Calu3 (cell line): ENCODE measurements at regions of chr22 and their contacts with region 1.

Region 1: GRCh38 chr22:28951969-28952521 is 68.7 kb downstream of the ZNRF3 start:
- DNase-seq: peak; percentile 25
- H3K4me3 Mint-ChIP-seq: no peak overlapping the region
- H3K27ac Mint-ChIP-seq: no peak overlapping the region
- H3K4me1 Mint-ChIP-seq: peaks cover 46% of the 10 kb centered on the region
- H3K27me3 Mint-ChIP-seq: no peaks in the 10 kb centered on the region
- CTCF ChIP-seq: no peak

Region 2: DNA sequence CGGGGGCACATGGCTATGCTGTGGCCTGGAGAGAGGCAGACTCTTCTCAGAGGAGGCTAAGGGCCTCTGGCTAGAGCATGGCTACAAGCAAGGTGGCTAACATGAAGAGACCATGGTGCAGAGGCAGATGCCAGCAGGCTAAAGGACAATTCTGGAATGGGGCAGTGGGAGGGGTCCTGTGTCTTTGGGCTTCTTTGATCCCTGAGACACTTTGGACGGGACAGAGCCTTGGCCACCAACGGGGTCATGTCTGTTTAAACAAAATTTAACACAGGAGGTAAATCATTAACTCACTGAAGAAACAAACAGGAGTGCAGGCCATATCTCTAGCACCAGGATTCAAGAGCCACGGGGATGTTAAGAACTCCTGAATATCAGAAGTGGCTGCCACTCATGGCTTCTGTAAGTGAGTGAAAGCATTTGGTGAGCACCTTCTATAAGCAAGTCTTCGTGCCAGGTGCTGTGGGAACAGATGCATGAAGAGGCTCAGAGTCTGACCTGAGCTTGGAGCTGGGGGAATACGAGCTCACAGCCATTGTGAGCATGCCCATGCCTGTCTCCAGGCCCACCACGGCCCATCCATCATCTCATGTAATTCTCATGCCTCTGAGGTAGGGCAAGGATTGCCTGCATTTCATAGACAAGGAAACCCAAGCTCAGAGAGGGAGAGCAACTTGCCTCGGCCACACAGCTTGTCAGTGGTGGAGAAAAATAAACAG is 87.0 kb before region 1 on chr22:
- CTCF ChIA-PET with region 1: no interaction called
- intact Hi-C with region 1: no loop called
- DNase-seq: no peak
- H3K4me3 Mint-ChIP-seq: no peak overlapping the region
- H3K27ac Mint-ChIP-seq: no peak overlapping the region
- H3K4me1 Mint-ChIP-seq: peaks cover 15% of the 10 kb centered on the region
- H3K27me3 Mint-ChIP-seq: no peaks in the 10 kb centered on the region
- CTCF ChIP-seq: no peak

Region 3: GRCh38 chr22:28967163-28967665 is 15.2 kb after region 1 on chr22:
- CTCF ChIA-PET with region 1: interaction called, 3 read pairs
- intact Hi-C with region 1: loop called (anchors 2 kb)
- DNase-seq: no peak
- H3K4me3 Mint-ChIP-seq: no peak overlapping the region
- H3K27ac Mint-ChIP-seq: no peak overlapping the region
- H3K4me1 Mint-ChIP-seq: peaks cover 47% of the 10 kb centered on the region
- H3K27me3 Mint-ChIP-seq: no peaks in the 10 kb centered on the region
- CTCF ChIP-seq: no peak